Pancreas (tissue), 10 donors: ENCODE measurements at regions of chr6 and their contacts with region 1.

Region 1: GRCh38 chr6:3052481-3053230 is 15.6 kb upstream of the RIPK1 start:
- DNase-seq: peak in 2 of 6 donors; percentile 37 to 70
- ATAC-seq: no peak
- H3K4me3 ChIP-seq: peak overlapping the region in 1 of 4 donors; percentile 51
- H3K27ac ChIP-seq: no peak overlapping the region
- H3K4me1 ChIP-seq: peaks cover 0 to 3% (median 0%) of the 10 kb centered on the region in 3 donors
- H3K27me3 ChIP-seq: no peaks in the 10 kb centered on the region
- CTCF ChIP-seq: no peak

Region 2: GRCh38 chr6:2622671-2623070 is 430.0 kb before region 1 on chr6:
- intact Hi-C with region 1: no loop called
- DNase-seq: no peak
- ATAC-seq: peak in 1 of 4 donors; percentile 27
- H3K4me3 ChIP-seq: no peak overlapping the region
- H3K27ac ChIP-seq: no peak overlapping the region
- H3K4me1 ChIP-seq: no peaks in the 10 kb centered on the region
- H3K27me3 ChIP-seq: peaks cover 0 to 3% (median 0%) of the 10 kb centered on the region in 4 donors
- CTCF ChIP-seq: no peak

Region 3: GRCh38 chr6:2841264-2842138 is 211.2 kb before region 1 on chr6 and contains the start of gene SERPINB1:
- intact Hi-C with region 1: loop called in 1 of 3 experiments (anchors 10 kb)
- DNase-seq: peak; percentile 91 to 96 (median 94)
- ATAC-seq: peak; percentile 76 to 86 (median 84)
- H3K4me3 ChIP-seq: peak within 1 kb of the TSS; percentile 33 to 61 (median 42)
- H3K27ac ChIP-seq: peak within 1 kb of the TSS; percentile 96 to 98 (median 96)
- H3K4me1 ChIP-seq: peaks cover 0 to 33% (median 31%) of the 10 kb centered on the region in 3 donors
- H3K27me3 ChIP-seq: no peaks in the 10 kb centered on the region
- CTCF ChIP-seq: no peak
- total RNA-seq, gene SERPINB1: 94.1 to 285 (median 190) TPM

Region 4: GRCh38 chr6:2986722-2987221 is 65.9 kb before region 1 on chr6:
- intact Hi-C with region 1: no loop called
- DNase-seq: no peak
- ATAC-seq: no peak
- H3K4me3 ChIP-seq: no peak overlapping the region
- H3K27ac ChIP-seq: peak overlapping the region in 1 of 4 donors; percentile 8
- H3K4me1 ChIP-seq: peaks cover 0 to 23% (median 0%) of the 10 kb centered on the region in 3 donors
- H3K27me3 ChIP-seq: no peaks in the 10 kb centered on the region
- CTCF ChIP-seq: no peak

Region 5: DNA sequence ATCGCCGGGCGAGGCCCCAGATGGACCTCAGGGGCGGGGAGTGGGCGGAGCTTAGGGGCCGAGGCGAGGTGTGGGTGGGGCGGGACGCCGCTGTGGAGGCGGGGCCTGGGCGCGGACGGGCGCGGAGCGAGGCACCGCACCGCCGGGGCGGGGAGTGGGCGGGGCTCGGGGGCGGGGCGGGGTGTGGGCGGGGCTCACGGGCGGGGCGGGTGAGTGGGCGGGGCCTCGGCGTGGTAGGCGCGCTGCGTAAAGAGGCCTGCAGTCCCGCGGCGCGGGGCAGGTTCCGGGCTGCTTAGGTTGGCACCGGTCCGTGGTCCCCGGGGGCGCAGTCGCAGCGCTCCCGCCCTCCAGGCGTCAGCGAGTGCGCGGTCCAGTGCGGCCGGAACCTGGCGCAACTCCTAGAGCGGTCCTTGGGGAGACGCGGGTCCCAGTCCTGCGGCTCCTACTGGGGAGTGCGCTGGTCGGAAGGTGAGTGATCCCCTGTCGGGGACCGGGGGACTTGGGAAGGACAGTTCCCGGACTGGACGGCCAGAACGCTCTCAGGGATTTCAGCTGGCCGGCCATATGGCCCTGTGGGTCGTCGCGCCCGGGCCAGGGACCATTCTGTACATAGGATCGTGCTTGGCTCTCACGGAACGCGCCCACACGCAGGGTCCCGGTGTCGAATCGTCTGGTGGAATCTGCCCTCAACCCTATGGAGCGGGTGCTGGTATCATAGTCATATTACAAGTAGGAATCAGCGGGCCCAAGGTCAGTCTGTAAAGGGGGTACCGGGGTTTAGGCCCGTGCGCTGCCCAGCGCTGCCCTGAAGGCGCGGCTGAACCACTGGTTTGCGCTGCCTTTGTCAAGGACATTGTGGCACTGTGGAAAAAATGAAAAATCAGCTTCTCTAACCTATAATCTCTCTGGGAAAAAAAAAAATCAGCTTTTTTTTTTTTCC is 52.8 kb before region 1 on chr6 and contains the start of gene NQO2:
- intact Hi-C with region 1: loop called in 2 of 3 experiments (anchors 2 to 5 kb)
- DNase-seq: peak; percentile 91 to 99 (median 96)
- ATAC-seq: peak; percentile 88 to 94 (median 90)
- H3K4me3 ChIP-seq: peak within 1 kb of the TSS; percentile 65 to 87 (median 80)
- H3K27ac ChIP-seq: peak within 1 kb of the TSS; percentile 59 to 81 (median 74)
- H3K4me1 ChIP-seq: peaks cover 0 to 13% (median 8%) of the 10 kb centered on the region in 3 donors
- H3K27me3 ChIP-seq: no peaks in the 10 kb centered on the region
- CTCF ChIP-seq: no peak
- total RNA-seq, gene NQO2: 12.7 to 21.6 (median 18.0) TPM